Right lobe of liver (tissue), 6 donors: ENCODE measurements at regions of chr3 and their contacts with region 1.

Region 1: GRCh38 chr3:46903331-46904071 is 26.0 kb downstream of the PTH1R start:
- DNase-seq: peak in 1 of 3 donors; percentile 57
- ATAC-seq: peak in 1 of 4 donors; percentile 9
- H3K4me3 ChIP-seq: no peak overlapping the region
- H3K27ac ChIP-seq: no peak overlapping the region
- H3K4me1 ChIP-seq: peaks cover 0 to 8% (median 6%) of the 10 kb centered on the region in 4 donors
- H3K27me3 ChIP-seq: no peaks in the 10 kb centered on the region
- CTCF ChIP-seq: no peak
- POLR2A ChIP-seq: no peak

Region 2: GRCh38 chr3:46705022-46705530 is 198.4 kb before region 1 on chr3:
- intact Hi-C with region 1: loop called (anchors 5 kb)
- DNase-seq: peak; percentile 65 to 80 (median 79)
- ATAC-seq: peak; percentile 83 to 88 (median 88)
- H3K4me3 ChIP-seq: no peak overlapping the region
- H3K27ac ChIP-seq: no peak overlapping the region
- H3K4me1 ChIP-seq: peaks cover 0 to 8% (median 3%) of the 10 kb centered on the region in 4 donors
- H3K27me3 ChIP-seq: no peaks in the 10 kb centered on the region
- CTCF ChIP-seq: peak; percentile 97 to 98 (median 98)
- POLR2A ChIP-seq: no peak

Region 3: GRCh38 chr3:46713898-46714552 is 189.5 kb before region 1 on chr3:
- intact Hi-C with region 1: loop called (anchors 5 kb)
- DNase-seq: peak in 2 of 3 donors; percentile 35 to 40
- ATAC-seq: no peak
- H3K4me3 ChIP-seq: no peak overlapping the region
- H3K27ac ChIP-seq: no peak overlapping the region
- H3K4me1 ChIP-seq: no peaks in the 10 kb centered on the region
- H3K27me3 ChIP-seq: no peaks in the 10 kb centered on the region
- CTCF ChIP-seq: no peak
- POLR2A ChIP-seq: no peak

Region 4: GRCh38 chr3:47009225-47010110 is 106.0 kb after region 1 on chr3:
- intact Hi-C with region 1: no loop called
- DNase-seq: peak; percentile 89 to 93 (median 92)
- ATAC-seq: peak; percentile 91 to 96 (median 94)
- H3K4me3 ChIP-seq: peak overlapping the region; percentile 44 to 62 (median 60)
- H3K27ac ChIP-seq: peak overlapping the region; percentile 40 to 55 (median 42)
- H3K4me1 ChIP-seq: peaks cover 0 to 5% (median 2%) of the 10 kb centered on the region in 4 donors
- H3K27me3 ChIP-seq: no peaks in the 10 kb centered on the region
- CTCF ChIP-seq: no peak
- POLR2A ChIP-seq: peak; percentile 49

Region 5: GRCh38 chr3:47035634-47036033 is 132.1 kb after region 1 on chr3:
- intact Hi-C with region 1: no loop called
- DNase-seq: no peak
- ATAC-seq: peak in 2 of 4 donors; percentile 22 to 45
- H3K4me3 ChIP-seq: no peak overlapping the region
- H3K27ac ChIP-seq: no peak overlapping the region
- H3K4me1 ChIP-seq: peaks cover 0 to 7% (median 0%) of the 10 kb centered on the region in 4 donors
- H3K27me3 ChIP-seq: no peaks in the 10 kb centered on the region
- CTCF ChIP-seq: no peak
- POLR2A ChIP-seq: no peak